CD8-positive, alpha-beta T cell (primary cell): ENCODE measurements at regions of chr1 and their contacts with region 1.

Region 1: DNA sequence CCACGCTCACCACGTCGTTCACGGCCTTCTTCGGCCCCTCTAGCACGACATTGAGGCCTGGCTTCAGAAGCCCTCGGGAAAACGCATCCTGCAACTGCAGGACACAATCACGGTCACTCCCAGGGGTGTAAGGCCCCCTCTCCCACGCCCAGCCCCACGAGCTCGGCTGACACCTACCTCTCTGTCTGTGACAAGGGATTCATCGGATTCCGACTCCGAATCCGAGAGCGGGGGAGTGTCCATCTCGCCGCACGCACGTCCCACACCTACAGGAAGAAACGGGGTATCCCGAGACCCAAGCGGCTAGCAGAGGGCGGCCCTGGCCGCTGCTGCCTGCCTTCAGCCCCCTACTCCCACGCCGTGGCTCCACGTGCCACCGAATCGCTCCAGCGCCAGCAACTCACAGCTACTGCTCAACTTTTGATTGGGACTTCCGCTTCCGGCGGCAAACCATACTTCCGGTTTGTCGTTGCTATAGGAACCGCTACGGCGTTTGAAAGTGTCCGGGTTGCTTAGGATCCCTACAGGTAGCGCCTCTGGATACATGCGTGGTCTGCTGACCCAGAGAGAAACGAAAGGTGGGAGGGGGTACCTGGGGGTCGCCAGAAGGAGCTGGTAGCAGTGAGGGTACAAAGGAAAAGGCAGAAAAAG is at the starts of genes CFAP57 and EBNA1BP2:
- DNase-seq: peak; percentile 83 to 96 (median 91)
- ATAC-seq: peak; percentile 67
- H3K4me3 ChIP-seq: peak within 1 kb of the TSS; percentile 89 to 93
- H3K4me3 Mint-ChIP-seq: peak within 1 kb of the TSS; percentile 100
- H3K27ac ChIP-seq: peak within 1 kb of the TSS; percentile 73 to 80
- H3K27ac Mint-ChIP-seq: peak within 1 kb of the TSS; percentile 93
- H3K4me1 ChIP-seq: peaks cover 12% of the 10 kb centered on the region
- H3K4me1 Mint-ChIP-seq: peaks cover 32% of the 10 kb centered on the region
- H3K27me3 ChIP-seq: peaks cover 0 to 4% of the 10 kb centered on the region in 2 experiments
- H3K27me3 Mint-ChIP-seq: peaks cover 14% of the 10 kb centered on the region
- CTCF ChIP-seq: no peak
- total RNA-seq, gene CFAP57: not detected
- total RNA-seq, gene EBNA1BP2: 22.1 to 23.1 TPM

Region 2: GRCh38 chr1:42335050-42335808 is 836.8 kb before region 1 on chr1 and contains the start of gene FOXJ3:
- CTCF ChIA-PET with region 1: no interaction called
- POLR2A ChIA-PET with region 1: no interaction called
- intact Hi-C with region 1: loop called (anchors 2 to 10 kb)
- DNase-seq: peak; percentile 82 to 99 (median 93)
- ATAC-seq: peak; percentile 92
- H3K4me3 ChIP-seq: peak within 1 kb of the TSS; percentile 82 to 85
- H3K4me3 Mint-ChIP-seq: peak within 1 kb of the TSS; percentile 98
- H3K27ac ChIP-seq: peak within 1 kb of the TSS; percentile 64 to 78
- H3K27ac Mint-ChIP-seq: peak within 1 kb of the TSS; percentile 91
- H3K4me1 ChIP-seq: peaks cover 32% of the 10 kb centered on the region
- H3K4me1 Mint-ChIP-seq: peaks cover 56% of the 10 kb centered on the region
- H3K27me3 ChIP-seq: no peaks in the 10 kb centered on the region
- H3K27me3 Mint-ChIP-seq: no peaks in the 10 kb centered on the region
- CTCF ChIP-seq: no peak
- total RNA-seq, gene FOXJ3: 80.6 to 89.3 TPM

Region 3: DNA sequence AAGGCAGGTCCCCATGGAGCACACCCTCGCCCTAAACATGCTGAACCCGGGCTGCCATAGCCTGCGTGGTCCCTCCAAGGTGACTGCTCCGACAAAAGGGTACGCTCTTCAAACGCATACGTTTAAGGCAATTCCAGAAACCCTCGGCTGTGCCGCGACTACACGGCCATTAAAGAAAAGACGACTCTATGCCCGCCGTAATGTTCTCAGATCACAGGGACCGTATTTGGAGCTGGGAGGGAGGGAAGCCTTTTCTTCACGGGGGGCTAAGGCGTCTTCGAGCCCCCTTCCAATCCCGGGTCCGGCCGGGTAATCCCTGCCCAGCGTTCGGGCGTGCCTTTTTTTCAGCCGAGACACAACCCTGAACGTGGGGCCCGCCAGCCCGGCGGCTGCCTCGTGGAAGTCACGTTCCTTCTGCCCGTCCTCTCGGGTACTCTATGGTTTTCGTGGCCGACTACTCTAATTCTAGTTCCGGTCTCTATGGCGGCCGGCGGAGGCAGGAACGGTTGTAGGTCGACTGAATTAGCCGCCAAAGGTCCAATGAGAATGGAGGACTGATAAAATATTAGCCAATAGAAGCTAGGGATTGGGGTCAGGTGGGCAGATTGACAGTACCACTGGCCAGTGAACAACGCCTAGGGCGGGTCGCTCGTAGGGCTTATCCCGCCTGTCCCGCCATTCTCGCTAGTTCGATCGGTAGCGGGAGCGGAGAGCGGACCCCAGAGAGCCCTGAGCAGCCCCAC is 490.1 kb before region 1 on chr1 and contains the start of gene YBX1:
- CTCF ChIA-PET with region 1: no interaction called
- POLR2A ChIA-PET with region 1: no interaction called
- intact Hi-C with region 1: loop called in 1 of 2 experiments (anchors 2 kb)
- DNase-seq: peak; percentile 88 to 98 (median 95)
- ATAC-seq: peak; percentile 89
- H3K4me3 ChIP-seq: peak within 1 kb of the TSS; percentile 81 to 84
- H3K4me3 Mint-ChIP-seq: peak within 1 kb of the TSS; percentile 99
- H3K27ac ChIP-seq: peak within 1 kb of the TSS; percentile 82 to 88
- H3K27ac Mint-ChIP-seq: peak within 1 kb of the TSS; percentile 97
- H3K4me1 ChIP-seq: peaks cover 43% of the 10 kb centered on the region
- H3K4me1 Mint-ChIP-seq: peaks cover 58% of the 10 kb centered on the region
- H3K27me3 ChIP-seq: no peaks in the 10 kb centered on the region
- H3K27me3 Mint-ChIP-seq: no peaks in the 10 kb centered on the region
- CTCF ChIP-seq: no peak
- total RNA-seq, gene YBX1: 440 to 450 TPM

Region 4: DNA sequence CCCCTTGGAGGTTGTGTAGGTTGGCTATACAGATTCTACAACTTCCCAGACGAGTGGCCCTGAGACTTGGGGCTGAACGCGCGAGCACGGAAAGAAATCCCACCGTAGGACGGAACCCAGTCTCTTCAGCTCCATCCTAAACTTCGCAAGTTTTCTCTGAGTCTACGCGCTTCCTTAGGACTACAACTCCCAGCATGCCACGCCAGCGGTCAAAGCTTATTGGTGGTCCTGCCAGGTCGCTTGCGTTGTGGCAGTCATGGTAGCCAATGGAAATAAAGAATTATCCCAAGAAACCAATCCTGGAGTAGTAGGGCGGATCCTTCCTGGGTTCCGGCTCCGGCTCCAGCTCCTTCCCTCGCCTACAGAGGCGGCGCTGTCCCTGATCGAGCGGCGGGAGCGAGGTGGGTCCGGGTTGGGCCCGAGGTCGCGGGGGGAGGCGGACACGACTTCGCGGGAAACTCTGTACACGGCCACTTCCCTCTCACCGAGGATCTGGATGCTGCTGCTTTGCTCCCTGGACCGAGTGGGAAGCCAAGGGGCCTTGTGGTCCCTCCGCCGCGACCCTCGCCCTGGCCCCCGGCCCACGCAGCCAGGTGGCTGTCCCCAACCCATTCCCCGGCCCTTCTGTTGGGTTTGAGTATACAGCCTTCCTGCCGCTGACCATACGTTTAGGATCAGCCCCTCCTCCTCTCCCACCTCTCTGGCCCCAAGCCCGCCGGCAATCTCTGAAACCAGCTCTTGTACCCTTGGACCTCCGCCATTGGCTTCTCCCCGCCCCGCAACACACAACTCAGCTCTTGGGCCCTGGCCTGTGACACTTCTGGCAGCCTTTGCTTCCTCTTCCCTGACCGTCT is 325.5 kb before region 1 on chr1 and contains the start of gene ZNF691:
- CTCF ChIA-PET with region 1: no interaction called
- POLR2A ChIA-PET with region 1: no interaction called
- intact Hi-C with region 1: loop called (anchors 1 to 2 kb)
- DNase-seq: peak; percentile 71 to 96 (median 87)
- ATAC-seq: peak; percentile 97
- H3K4me3 ChIP-seq: peak within 1 kb of the TSS; percentile 74 to 96
- H3K4me3 Mint-ChIP-seq: peak within 1 kb of the TSS; percentile 92
- H3K27ac ChIP-seq: peak within 1 kb of the TSS; percentile 46 to 72
- H3K27ac Mint-ChIP-seq: peak within 1 kb of the TSS; percentile 88
- H3K4me1 ChIP-seq: peaks cover 23% of the 10 kb centered on the region
- H3K4me1 Mint-ChIP-seq: peaks cover 38% of the 10 kb centered on the region
- H3K27me3 ChIP-seq: no peaks in the 10 kb centered on the region
- H3K27me3 Mint-ChIP-seq: no peaks in the 10 kb centered on the region
- CTCF ChIP-seq: no peak
- total RNA-seq, gene ZNF691: 1.1 to 1.3 TPM

Region 5: DNA sequence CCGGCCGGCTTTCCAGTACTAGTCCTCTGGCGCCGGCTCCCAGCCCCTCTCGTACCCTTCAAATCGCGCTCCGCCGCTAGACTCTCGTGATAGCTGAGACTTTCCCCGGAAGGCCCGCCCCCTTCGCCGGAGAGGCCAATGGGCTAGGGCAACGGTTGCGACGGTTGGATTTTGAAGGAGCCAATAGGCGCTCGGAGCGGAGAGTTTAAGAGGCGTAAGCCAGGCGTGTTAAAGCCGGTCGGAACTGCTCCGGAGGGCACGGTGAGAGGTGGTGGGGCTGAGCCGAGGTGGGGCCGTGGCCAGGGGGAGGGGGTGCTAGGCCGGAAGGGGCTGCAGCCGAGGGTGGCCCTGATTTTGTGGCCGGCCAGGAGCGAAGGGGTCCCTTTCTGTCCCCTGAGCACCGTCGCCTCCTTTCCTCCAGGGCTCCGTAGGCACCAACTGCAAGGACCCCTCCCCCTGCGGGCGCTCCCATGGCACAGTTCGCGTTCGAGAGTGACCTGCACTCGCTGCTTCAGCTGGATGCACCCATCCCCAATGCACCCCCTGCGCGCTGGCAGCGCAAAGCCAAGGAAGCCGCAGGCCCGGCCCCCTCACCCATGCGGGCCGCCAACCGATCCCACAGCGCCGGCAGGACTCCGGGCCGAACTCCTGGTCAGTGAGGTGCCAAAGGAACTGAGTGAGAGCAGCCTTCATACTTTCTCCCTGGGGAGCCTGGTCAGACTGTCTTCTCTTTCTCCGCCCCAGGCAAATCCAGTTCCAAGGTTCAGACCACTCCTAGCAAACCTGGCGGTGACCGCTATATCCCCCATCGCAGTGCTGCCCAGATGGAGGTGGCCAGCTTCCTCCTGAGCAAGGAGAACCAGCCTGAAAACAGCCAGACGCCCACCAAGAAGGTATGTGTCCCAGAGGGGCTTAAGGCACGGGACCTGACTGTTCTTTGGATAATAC is 187.0 kb after region 1 on chr1 and contains the start of gene CDC20:
- CTCF ChIA-PET with region 1: no interaction called
- POLR2A ChIA-PET with region 1: no interaction called
- intact Hi-C with region 1: loop called (anchors 1 to 5 kb)
- DNase-seq: peak; percentile 93 to 99 (median 97)
- ATAC-seq: peak; percentile 98
- H3K4me3 ChIP-seq: peak within 1 kb of the TSS; percentile 79 to 92
- H3K4me3 Mint-ChIP-seq: peak within 1 kb of the TSS; percentile 89
- H3K27ac ChIP-seq: peak within 1 kb of the TSS; percentile 62 to 76
- H3K27ac Mint-ChIP-seq: peak within 1 kb of the TSS; percentile 87
- H3K4me1 ChIP-seq: peaks cover 12% of the 10 kb centered on the region
- H3K4me1 Mint-ChIP-seq: peaks cover 15% of the 10 kb centered on the region
- H3K27me3 ChIP-seq: no peaks in the 10 kb centered on the region
- H3K27me3 Mint-ChIP-seq: no peaks in the 10 kb centered on the region
- CTCF ChIP-seq: no peak
- total RNA-seq, gene CDC20: 0.92 to 1.3 TPM

Region 6: DNA sequence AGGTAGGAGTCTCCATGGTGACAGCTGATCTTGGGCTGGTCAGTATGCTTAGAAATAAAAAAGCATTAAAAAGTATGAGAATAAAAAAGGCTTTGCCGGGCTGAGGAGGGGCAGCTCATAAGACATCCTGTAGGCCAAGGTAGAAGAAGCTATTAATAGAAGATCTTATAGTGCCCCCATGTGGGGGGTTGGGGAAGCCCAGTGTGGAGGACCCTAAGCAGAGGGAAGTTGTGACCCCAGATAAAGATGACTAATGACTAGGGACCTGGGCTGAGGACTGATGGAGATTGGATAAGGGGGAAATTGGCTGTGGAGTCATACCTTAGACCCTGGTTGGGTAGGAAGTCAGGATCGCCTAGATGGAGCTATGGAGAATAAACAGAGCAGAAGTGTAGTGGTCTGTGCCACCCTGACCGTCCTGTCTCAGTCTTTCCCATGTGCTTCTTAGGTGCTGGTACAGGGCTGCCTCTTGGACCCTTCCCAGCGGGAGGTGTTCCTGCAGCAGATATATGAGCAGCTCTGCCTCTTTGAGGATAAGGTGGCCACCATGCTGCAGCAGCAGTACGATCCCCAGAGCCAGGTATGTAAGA is 242.7 kb after region 1 on chr1:
- CTCF ChIA-PET with region 1: no interaction called
- POLR2A ChIA-PET with region 1: no interaction called
- intact Hi-C with region 1: no loop called
- DNase-seq: peak; percentile 37 to 75 (median 70)
- ATAC-seq: peak; percentile 99
- H3K4me3 ChIP-seq: no peak overlapping the region
- H3K4me3 Mint-ChIP-seq: no peak overlapping the region
- H3K27ac ChIP-seq: no peak overlapping the region
- H3K27ac Mint-ChIP-seq: peak overlapping the region; percentile 6
- H3K4me1 ChIP-seq: no peaks in the 10 kb centered on the region
- H3K4me1 Mint-ChIP-seq: no peaks in the 10 kb centered on the region
- H3K27me3 ChIP-seq: no peaks in the 10 kb centered on the region
- H3K27me3 Mint-ChIP-seq: no peaks in the 10 kb centered on the region
- CTCF ChIP-seq: peak; percentile 60

Region 7: DNA sequence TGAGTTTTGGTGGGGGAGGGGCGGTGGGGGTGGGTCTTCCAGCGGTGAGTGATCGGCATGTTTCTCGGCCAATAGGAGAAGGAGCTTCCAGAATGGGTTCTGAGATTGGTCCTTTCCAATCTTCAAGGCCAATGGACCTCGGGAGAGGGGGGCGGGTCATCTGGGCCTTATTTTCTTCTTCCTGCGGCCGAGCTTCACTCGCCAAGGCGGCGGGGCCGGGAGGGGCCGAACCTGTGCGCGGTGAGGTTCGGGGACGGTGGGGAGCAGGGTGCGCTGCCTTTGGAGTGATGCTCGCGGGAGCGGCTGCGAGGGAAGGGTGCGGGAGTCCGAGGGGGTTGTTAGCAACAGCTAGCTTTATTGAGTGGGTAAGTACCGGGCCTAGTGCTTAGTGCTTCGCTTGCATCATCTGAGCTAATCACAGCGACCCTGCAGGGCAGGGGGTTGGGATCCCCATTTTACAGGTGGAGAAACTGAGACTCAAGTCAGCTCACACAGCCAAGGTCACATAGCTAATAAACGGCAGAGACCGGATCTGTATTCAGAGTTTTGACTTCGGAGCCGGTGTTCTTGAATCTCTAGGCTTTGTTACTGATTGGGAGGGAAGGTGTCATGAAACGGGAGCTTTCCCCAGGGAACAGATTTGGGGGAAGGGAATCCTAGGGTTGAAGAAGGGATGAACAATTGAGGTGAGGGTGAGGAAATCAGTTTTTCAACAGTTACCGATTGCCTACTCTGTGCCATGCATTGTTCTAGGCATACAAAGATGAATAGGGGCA is 478.5 kb after region 1 on chr1:
- CTCF ChIA-PET with region 1: no interaction called
- POLR2A ChIA-PET with region 1: no interaction called
- intact Hi-C with region 1: loop called (anchors 1 to 5 kb)
- DNase-seq: peak in 8 of 9 experiments; percentile 74 to 97 (median 89)
- ATAC-seq: peak; percentile 71
- H3K4me3 ChIP-seq: peak overlapping the region; percentile 87 to 92
- H3K4me3 Mint-ChIP-seq: peak overlapping the region; percentile 100
- H3K27ac ChIP-seq: peak overlapping the region; percentile 49 to 86
- H3K27ac Mint-ChIP-seq: peak overlapping the region; percentile 97
- H3K4me1 ChIP-seq: peaks cover 17% of the 10 kb centered on the region
- H3K4me1 Mint-ChIP-seq: peaks cover 41% of the 10 kb centered on the region
- H3K27me3 ChIP-seq: no peaks in the 10 kb centered on the region
- H3K27me3 Mint-ChIP-seq: no peaks in the 10 kb centered on the region
- CTCF ChIP-seq: no peak

Region 8: DNA sequence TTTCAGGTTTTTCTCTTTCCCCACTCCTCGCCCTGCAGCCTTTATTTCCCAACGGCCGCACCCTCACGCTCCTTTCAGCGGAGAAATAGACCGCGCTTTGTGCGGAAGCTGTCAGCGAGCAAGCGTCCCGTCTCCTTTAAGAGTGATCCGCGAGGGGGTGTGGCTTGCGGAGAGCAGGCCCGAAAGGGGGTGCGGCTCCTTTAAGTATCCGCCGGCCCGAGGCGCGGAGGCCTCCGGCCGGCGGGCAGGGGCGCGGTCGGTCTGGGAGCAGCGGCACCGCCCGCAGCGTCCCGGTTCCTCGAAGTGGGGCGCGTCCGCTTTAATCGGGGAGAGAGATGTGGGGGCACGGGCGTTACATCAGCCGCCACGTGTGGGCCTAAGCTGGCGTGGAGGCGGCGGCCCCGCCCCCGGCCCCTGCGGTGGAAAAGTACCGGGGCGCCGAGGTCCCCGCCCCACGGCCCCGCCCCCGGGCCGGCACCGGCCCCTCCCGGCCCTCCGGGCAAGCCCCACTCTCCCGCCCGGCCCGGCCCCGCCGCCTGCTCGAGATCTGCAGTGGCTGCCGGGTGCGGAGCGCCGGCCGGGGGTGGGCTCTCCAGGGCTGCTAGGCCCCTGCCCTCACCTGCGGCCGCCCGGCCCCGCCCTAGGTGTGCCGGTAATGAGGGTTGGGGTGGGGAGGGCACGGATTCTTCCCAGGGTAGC is 858.1 kb after region 1 on chr1:
- CTCF ChIA-PET with region 1: no interaction called
- POLR2A ChIA-PET with region 1: no interaction called
- intact Hi-C with region 1: loop called in 1 of 2 experiments (anchors 10 kb)
- DNase-seq: peak; percentile 57 to 90 (median 85)
- ATAC-seq: peak; percentile 78
- H3K4me3 ChIP-seq: peak overlapping the region; percentile 64 to 76
- H3K4me3 Mint-ChIP-seq: peak overlapping the region; percentile 97
- H3K27ac ChIP-seq: peak overlapping the region; percentile 51 to 60
- H3K27ac Mint-ChIP-seq: peak overlapping the region; percentile 95
- H3K4me1 ChIP-seq: peaks cover 12% of the 10 kb centered on the region
- H3K4me1 Mint-ChIP-seq: peaks cover 20% of the 10 kb centered on the region
- H3K27me3 ChIP-seq: no peaks in the 10 kb centered on the region
- H3K27me3 Mint-ChIP-seq: no peaks in the 10 kb centered on the region
- CTCF ChIP-seq: no peak